ENCODE measurements at regions of chr5 and their contacts with region 1.

Region 1: GRCh38 chr5:173057062-173057924 is 1.1 kb downstream of the CREBRF start:
- DNase-seq: peak; percentile 100
- ATAC-seq: peak; percentile 91
- H3K4me3 Mint-ChIP-seq: peak overlapping the region; percentile 93
- H3K27ac Mint-ChIP-seq: peak overlapping the region; percentile 98
- H3K4me1 Mint-ChIP-seq: peaks cover 14% of the 10 kb centered on the region
- H3K27me3 Mint-ChIP-seq: no peaks in the 10 kb centered on the region
- CTCF ChIP-seq: no peak

Region 2: DNA sequence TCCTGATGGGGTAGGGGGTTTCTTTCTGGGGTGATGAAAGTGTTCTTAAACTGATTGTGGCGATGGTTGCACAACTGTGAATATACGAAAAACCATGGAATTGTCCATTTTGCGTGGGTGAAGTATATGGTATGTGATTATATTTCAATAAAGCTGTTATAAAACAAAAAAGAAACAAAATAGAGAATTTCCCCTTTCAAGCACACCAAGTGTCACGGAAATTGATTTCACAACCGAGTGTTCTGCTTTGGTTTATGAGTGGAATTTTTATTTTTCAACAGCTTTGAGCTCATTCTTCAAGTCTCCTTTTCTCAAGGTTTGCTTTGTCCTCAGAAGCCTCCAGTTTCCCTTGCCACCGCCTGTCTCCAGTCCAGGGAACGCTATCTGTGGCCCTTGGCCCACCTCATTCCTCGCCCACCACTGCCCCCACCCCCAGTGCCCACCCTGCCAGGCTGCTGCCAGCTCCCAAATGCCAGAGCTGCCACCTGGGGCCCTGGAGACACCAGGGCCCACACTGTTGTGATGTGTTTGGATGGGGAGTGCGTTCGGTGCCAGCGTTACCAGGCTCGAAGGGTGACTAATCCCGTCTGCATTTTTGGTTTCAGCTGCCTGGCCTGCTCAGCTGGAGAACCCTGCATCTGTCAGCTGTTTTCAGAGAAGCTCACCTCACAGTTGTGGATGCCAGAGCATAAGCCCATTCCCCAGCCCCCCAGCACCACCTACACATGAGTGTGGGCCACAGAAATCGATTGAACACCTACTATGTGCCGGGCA is 316.7 kb before region 1 on chr5:
- CTCF ChIA-PET with region 1: no interaction called
- POLR2A ChIA-PET with region 1: no interaction called
- DNase-seq: no peak
- ATAC-seq: no peak
- H3K4me3 Mint-ChIP-seq: no peak overlapping the region
- H3K27ac Mint-ChIP-seq: no peak overlapping the region
- H3K4me1 Mint-ChIP-seq: no peaks in the 10 kb centered on the region
- H3K27me3 Mint-ChIP-seq: peaks cover 19% of the 10 kb centered on the region
- CTCF ChIP-seq: no peak

Region 3: DNA sequence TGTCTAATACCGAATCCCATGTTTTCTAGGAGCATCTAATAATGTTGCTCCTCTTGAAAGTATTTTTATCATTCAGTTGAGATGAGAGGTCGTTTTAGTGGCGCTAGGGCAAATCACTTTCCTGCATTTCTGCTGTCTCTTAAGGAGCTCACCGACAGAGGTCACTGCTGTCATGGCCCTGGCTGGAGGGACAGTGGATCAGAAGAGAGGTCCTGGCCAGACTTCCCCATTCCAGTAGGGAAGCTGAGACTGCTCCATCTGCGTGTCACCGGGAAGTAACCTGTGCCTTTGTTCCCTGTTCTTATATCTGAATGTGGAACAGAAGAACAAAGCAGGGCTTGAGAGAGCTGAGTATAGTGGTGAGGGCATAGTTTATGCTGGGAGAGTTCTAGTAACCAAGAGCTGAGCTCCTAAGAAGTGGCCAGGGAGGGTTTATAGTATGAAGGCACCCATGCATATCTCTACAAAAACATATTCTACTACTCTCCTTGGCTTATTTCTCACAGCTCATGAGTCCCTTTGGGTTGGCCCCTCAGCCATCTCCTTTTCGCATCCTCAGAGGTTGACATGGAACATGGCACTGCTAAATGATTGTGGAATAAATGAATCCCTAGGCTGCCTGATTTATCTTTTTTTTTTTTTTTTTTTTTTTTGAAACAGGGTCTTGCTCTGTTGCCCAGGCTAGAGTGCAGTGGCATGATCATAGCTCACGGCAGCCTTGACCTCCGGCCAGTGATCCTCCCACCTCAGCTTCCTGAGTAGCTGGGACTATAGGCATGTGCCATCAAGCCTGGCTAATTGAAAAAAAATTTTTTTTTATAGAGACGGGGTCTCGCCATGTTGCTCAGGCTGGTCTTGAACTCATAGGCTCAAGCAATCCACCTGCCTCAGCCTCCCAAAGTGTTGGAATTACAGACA is 46.5 kb before region 1 on chr5:
- CTCF ChIA-PET with region 1: interaction called, 16 read pairs
- POLR2A ChIA-PET with region 1: no interaction called
- DNase-seq: peak; percentile 58
- ATAC-seq: peak; percentile 84
- H3K4me3 Mint-ChIP-seq: no peak overlapping the region
- H3K27ac Mint-ChIP-seq: peak overlapping the region; percentile 56; the same call in 1 of the 2 replicates
- H3K4me1 Mint-ChIP-seq: peaks cover 13% of the 10 kb centered on the region
- H3K27me3 Mint-ChIP-seq: no peaks in the 10 kb centered on the region
- CTCF ChIP-seq: peak; percentile 23; the same call in 1 of the 2 replicates

Region 4: DNA sequence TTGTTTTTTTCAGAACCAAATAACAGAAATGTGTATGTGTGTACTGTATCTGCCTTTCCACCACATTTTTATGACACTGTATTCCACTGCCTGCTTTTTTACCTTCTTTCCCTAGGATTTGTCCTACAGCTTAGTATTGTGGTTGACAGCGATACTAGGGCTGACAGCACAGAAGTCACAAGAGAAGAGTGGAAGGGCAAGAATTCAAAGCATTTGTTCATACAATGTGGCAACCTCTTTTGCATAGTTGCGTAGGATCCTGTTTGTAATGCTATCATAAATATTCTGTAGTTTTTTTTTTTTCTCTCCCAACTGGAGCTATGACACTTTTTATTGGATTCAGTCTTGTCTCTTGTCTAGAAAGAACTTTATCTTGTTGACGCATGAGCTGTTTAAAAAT is 81.4 kb after region 1 on chr5:
- CTCF ChIA-PET with region 1: interaction called, 11 read pairs
- POLR2A ChIA-PET with region 1: no interaction called
- DNase-seq: no peak
- ATAC-seq: peak; percentile 52
- H3K4me3 Mint-ChIP-seq: peak overlapping the region; percentile 34
- H3K27ac Mint-ChIP-seq: peak overlapping the region; percentile 23; the same call in 1 of the 2 replicates
- H3K4me1 Mint-ChIP-seq: peaks cover 28% of the 10 kb centered on the region
- H3K27me3 Mint-ChIP-seq: no peaks in the 10 kb centered on the region; the same call in 1 of the 2 replicates
- CTCF ChIP-seq: no peak

Region 5: DNA sequence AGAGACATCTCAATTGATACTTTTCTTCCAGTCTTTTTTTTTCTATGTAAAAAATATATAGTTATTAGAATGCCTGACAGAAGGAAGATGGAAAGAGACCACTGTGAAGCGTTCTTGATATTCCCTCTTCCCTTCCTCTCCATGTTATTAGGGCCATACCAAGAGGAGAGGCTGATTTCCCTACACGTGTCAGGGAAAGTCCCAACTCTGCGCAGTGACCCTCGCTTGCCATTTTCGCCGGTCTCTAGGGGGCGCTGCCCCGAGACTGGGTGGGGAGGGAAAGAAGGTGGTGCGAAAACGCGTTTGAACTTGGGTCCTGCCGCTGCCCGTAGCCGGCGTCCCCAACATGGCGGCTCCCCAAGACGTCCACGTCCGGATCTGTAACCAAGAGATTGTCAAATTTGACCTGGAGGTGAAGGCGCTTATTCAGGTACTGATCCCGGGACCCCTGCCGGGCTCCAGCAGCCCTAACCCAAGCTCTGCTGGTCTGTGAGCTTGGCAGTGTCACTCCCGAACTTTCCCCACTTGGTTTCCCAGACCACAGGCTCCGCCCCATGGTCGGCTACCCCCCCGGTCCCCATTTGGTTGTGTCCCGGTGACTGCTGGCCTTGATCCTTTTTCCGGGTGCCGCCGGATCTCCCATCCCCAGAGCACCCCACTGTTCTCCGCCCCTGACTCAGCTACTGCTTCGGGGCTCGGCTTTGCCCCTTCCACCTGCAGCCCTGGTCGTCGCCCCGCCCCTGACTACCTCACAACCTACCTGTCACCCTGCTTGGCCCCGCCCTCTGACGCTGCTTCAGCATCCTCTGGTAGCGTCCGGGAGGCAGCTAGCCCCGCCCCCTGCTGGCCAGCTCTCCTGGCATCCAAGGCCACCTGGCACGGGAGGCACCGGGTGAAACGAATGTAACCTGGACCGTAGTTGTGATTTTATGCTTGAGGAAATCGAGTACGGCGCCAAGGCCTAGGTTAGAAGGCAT is 87.2 kb after region 1 on chr5 and contains the start of gene BNIP1:
- CTCF ChIA-PET with region 1: interaction called, 14 read pairs
- POLR2A ChIA-PET with region 1: interaction called, 5 read pairs
- DNase-seq: peak; percentile 99
- ATAC-seq: peak; percentile 96
- H3K4me3 Mint-ChIP-seq: peak within 1 kb of the TSS; percentile 97
- H3K27ac Mint-ChIP-seq: peak within 1 kb of the TSS; percentile 97
- H3K4me1 Mint-ChIP-seq: peaks cover 14% of the 10 kb centered on the region
- H3K27me3 Mint-ChIP-seq: no peaks in the 10 kb centered on the region; the same call in 1 of the 2 replicates
- CTCF ChIP-seq: peak; percentile 83
- total RNA-seq, gene BNIP1: 11.3 to 15.4 TPM (median 12.4 TPM) in 3 replicates